Breast epithelium (tissue), 4 donors: ENCODE measurements at regions of chr22 and their contacts with region 1.

Region 1: GRCh38 chr22:44269757-44270555 is 42.8 kb downstream of the SHISAL1 start:
- DNase-seq: no peak
- H3K4me3 ChIP-seq: no peak overlapping the region
- H3K27ac ChIP-seq: no peak overlapping the region
- H3K4me1 ChIP-seq: no peaks in the 10 kb centered on the region
- H3K27me3 ChIP-seq: peaks cover 0 to 5% of the 10 kb centered on the region in 2 donors
- CTCF ChIP-seq: no peak
- POLR2A ChIP-seq: no peak

Region 2: DNA sequence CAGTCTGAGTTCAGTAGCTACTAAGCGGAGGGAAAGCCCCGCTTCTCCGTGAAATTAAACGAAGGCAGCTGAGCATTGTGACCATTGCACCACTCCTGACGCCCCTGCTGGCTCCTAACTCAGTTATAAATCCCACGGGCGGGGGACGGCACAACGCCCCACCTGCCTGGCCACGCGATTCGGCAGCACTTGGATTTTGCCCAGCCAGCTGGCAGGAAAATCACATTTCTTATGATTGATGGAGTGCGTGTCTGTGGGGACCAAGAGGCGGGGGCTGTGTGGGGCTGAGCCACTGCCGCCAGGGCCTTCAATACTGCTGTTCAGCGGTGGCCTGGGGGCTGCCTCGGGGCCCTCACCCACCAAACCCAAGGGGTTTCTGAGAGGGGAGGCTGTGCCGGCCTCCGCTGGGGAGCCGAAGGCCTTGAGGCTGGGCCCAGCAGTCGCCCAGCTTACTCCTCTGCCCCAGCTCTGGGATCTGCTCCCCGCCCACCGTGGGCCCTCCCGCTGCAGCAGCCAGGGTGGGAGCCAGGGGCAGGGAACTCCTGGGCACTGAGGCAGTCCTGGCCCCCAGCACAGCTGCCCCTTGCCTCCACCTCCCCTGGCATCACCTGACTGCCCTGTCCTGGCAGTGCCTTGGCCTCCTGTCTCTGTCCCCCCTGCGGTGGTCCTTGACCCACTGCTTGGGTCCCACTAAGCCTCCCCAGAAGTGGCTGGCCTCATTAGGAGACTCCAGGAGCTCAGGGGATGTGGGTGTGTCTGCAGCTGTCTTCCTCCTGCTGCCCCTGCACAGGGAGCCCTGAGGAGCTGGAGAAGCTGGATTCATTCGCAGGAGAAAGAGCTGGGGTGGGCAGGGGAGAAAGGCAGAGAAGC is 12.0 kb after region 1 on chr22:
- intact Hi-C with region 1: loop called (anchors 1 kb)
- DNase-seq: no peak
- H3K4me3 ChIP-seq: no peak overlapping the region
- H3K27ac ChIP-seq: no peak overlapping the region
- H3K4me1 ChIP-seq: no peaks in the 10 kb centered on the region
- H3K27me3 ChIP-seq: peaks cover 0 to 44% of the 10 kb centered on the region in 2 donors
- CTCF ChIP-seq: no peak
- POLR2A ChIP-seq: no peak